Body of pancreas (tissue), 4 donors: ENCODE measurements at regions of chr15 and their contacts with region 1.

Region 1: DNA sequence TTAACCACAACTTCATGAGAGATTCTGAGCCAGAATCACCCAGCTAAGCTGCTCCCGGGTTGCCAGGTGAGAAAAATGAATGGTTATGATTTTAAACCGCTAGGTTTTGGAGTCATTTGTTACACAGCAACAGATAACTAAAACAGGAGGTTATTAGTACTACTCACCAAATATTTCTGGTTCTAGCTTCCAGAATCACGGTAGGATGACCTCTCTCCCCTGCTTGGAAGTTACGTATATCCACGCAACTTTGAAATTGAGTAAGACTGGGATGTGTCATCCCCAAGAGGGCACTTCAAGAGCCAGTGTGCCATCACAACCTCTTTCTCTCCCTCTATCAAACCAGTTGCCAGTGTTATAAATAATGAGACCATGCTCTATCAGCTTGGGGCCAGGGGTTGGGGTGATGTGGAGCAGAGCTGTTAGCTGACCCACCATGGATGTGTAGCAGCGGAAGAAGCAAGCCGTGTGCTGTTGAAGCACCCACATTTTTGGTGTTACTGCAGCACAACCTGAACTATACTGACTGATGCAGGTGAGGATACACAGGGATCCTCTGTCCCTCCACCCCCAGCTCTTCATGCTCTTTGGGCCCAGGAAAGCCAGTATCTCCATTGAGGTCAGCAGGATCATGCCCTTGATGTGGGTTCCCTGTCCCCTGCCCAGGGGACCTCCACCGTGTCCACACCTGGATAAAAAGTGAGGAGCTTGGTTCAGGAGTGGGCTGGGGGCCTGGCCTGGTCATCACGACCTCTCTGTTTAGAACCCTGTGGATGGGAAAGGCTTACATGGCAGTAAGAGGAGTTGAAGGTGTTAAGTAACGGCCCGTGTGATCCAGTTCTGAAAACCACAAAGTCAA is 19.4 kb upstream of the ALDH1A3 start:
- DNase-seq: no peak
- ATAC-seq: no peak
- H3K4me3 ChIP-seq: no peak overlapping the region
- H3K27ac ChIP-seq: no peak overlapping the region
- H3K4me1 ChIP-seq: no peaks in the 10 kb centered on the region
- H3K27me3 ChIP-seq: no peaks in the 10 kb centered on the region
- CTCF ChIP-seq: no peak
- POLR2A ChIP-seq: no peak

Region 2: GRCh38 chr15:100821327-100821726 is 38.9 kb before region 1 on chr15:
- intact Hi-C with region 1: no loop called
- DNase-seq: no peak
- ATAC-seq: no peak
- H3K4me3 ChIP-seq: no peak overlapping the region
- H3K27ac ChIP-seq: no peak overlapping the region
- H3K4me1 ChIP-seq: no peaks in the 10 kb centered on the region
- H3K27me3 ChIP-seq: no peaks in the 10 kb centered on the region
- CTCF ChIP-seq: no peak
- POLR2A ChIP-seq: no peak

Region 3: GRCh38 chr15:100909991-100910955 is 50.1 kb after region 1 on chr15:
- intact Hi-C with region 1: loop called (anchors 5 kb)
- DNase-seq: no peak
- ATAC-seq: no peak
- H3K4me3 ChIP-seq: no peak overlapping the region
- H3K27ac ChIP-seq: no peak overlapping the region
- H3K4me1 ChIP-seq: no peaks in the 10 kb centered on the region
- H3K27me3 ChIP-seq: no peaks in the 10 kb centered on the region
- CTCF ChIP-seq: no peak
- POLR2A ChIP-seq: no peak

Region 4: DNA sequence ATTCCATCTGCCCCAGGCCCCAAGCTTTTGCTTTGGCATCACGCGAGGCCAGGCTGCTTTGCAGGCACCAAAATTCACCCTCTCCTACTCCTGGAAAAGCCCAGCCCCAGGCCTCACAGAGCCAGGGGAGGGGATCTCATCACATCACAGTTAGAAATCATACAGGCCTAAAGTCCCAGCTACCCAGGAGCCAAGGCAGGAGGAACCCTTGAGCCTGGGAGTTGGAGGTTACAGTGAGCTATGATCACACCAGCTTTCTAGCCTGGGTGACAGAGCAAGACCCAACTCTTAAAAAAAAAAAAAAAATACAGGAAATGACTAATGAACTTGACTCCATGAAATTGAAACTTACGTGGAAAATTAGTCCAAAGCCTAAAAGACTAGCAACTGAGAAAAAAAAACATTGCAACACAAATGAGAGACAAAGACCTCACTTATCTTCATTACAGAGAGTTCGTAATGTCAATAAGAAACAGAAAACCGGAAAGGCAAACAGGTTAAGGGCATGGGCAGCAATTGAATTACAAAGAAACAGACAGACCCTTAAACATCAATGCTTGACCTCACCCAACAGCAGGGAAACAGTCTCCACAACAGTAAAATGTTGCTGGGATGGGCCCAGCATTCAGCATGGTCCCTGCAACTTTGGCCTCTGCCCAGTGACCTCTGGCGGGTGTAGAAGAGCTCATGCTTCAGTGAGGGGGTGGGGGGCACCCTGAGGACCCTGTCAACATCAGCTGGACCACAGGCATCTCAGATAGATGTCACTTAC is 210.5 kb after region 1 on chr15:
- intact Hi-C with region 1: no loop called
- DNase-seq: no peak
- ATAC-seq: peak; percentile 58
- H3K4me3 ChIP-seq: no peak overlapping the region
- H3K27ac ChIP-seq: peak overlapping the region in 2 of 4 donors; percentile 21 to 51
- H3K4me1 ChIP-seq: peaks cover 7% of the 10 kb centered on the region
- H3K27me3 ChIP-seq: no peaks in the 10 kb centered on the region
- CTCF ChIP-seq: no peak
- POLR2A ChIP-seq: no peak